ENCODE measurements at regions of chr22 and their contacts with region 1.

Region 1: DNA sequence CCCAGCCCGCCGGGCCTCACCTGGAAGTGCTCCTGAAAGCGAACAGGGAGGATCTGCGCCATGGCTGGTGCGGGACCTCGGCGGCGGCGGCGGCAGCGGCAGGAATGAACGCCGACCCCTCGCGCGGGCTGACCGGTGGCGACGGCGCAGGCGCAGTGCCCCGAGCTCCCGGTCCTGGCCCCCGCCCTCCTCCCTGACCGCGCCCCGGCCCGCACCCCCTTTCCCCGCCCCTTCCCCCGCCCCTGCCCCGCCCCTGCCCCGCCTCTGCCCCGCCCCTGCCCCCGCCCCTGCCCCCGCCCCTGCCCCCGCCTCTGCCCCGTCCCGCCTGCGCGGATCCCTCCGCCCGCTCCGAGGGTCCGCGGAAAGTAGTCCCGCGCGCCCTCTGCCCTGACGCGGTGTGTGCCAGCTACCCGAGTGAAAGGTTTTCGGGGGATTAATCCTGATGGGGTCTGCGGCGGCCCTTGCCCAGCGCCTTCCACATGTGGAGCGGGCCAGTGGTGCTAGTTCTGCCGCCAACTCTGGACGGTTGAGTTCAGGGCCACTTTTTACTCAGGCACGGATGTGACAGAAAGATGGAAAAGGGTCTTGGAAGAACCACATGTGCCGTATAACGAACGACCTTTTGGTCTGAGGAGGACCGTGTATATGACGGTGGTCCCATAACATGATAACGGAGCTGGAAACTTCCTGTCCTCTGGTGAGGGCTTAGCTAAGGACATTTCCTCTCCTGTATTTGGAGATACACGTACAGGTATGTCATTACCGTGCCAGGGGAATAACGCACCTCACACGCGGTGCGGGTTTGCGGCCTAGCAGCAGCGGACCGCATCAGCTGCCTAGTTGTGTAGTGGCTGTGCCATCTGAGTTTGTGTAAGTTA is at the start of gene CLTCL1:
- DNase-seq: peak; percentile 57
- H3K4me3 Mint-ChIP-seq: peak within 1 kb of the TSS; percentile 84
- H3K27ac Mint-ChIP-seq: peak within 1 kb of the TSS; percentile 52
- H3K4me1 Mint-ChIP-seq: peaks cover 35% of the 10 kb centered on the region
- H3K27me3 Mint-ChIP-seq: no peaks in the 10 kb centered on the region
- CTCF ChIP-seq: no peak
- total RNA-seq, gene CLTCL1: 12.2 and 21.7 TPM in 2 replicates

Region 2: GRCh38 chr22:19143967-19144400 is 147.8 kb before region 1 on chr22:
- CTCF ChIA-PET with region 1: interaction called, 8 read pairs
- POLR2A ChIA-PET with region 1: interaction called, 13 read pairs
- intact Hi-C with region 1: no loop called
- DNase-seq: no peak
- H3K4me3 Mint-ChIP-seq: peak overlapping the region; percentile 100
- H3K27ac Mint-ChIP-seq: peak overlapping the region; percentile 99
- H3K4me1 Mint-ChIP-seq: peaks cover 11% of the 10 kb centered on the region
- H3K27me3 Mint-ChIP-seq: no peaks in the 10 kb centered on the region
- CTCF ChIP-seq: no peak

Region 3: DNA sequence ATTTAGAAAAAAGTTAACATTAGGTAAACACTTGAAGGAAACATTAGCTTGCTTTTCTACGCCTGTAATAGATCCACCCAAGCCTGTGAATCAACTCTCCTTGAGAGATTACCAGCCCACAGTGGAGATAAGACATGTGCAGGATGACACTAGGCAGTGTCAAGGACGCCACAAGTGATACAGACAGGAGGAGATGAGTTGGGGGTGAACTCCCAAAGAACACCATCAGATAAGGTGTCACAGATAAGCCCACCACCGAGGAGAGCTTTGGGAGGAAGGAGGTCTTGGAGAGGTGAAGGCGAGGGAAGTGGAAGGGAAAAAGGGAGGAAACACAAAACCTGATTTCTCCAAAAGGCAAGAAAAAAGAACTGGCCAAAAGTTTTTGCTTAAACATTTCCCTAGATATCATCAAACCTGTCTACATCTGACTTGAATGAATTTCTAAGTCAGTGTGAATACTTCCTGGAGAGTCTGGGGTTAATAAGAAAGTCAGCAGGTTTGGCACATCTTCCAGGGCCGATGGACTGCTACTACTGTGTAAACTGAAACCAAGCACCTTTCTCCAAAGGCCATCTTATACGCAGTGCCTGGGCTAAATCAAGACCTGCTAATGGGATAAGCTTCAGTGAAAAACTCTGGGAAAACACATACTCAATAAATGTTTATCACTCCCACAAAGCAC is 15.8 kb before region 1 on chr22:
- CTCF ChIA-PET with region 1: interaction called, 3 read pairs
- POLR2A ChIA-PET with region 1: interaction called, 11 read pairs
- intact Hi-C with region 1: no loop called
- DNase-seq: no peak
- H3K4me3 Mint-ChIP-seq: no peak overlapping the region
- H3K27ac Mint-ChIP-seq: no peak overlapping the region
- H3K4me1 Mint-ChIP-seq: peaks cover 16% of the 10 kb centered on the region
- H3K27me3 Mint-ChIP-seq: no peaks in the 10 kb centered on the region
- CTCF ChIP-seq: no peak

Region 4: GRCh38 chr22:19479357-19480172 is 187.7 kb after region 1 on chr22 and contains the start of gene CDC45:
- CTCF ChIA-PET with region 1: interaction called, 4 read pairs
- POLR2A ChIA-PET with region 1: interaction called, 22 read pairs
- intact Hi-C with region 1: no loop called
- DNase-seq: peak; percentile 98
- H3K4me3 Mint-ChIP-seq: peak within 1 kb of the TSS; percentile 96
- H3K27ac Mint-ChIP-seq: peak within 1 kb of the TSS; percentile 100
- H3K4me1 Mint-ChIP-seq: peaks cover 38% of the 10 kb centered on the region
- H3K27me3 Mint-ChIP-seq: no peaks in the 10 kb centered on the region
- CTCF ChIP-seq: no peak
- total RNA-seq, gene CDC45: 7.5 and 18.6 TPM in 2 replicates

Region 5: DNA sequence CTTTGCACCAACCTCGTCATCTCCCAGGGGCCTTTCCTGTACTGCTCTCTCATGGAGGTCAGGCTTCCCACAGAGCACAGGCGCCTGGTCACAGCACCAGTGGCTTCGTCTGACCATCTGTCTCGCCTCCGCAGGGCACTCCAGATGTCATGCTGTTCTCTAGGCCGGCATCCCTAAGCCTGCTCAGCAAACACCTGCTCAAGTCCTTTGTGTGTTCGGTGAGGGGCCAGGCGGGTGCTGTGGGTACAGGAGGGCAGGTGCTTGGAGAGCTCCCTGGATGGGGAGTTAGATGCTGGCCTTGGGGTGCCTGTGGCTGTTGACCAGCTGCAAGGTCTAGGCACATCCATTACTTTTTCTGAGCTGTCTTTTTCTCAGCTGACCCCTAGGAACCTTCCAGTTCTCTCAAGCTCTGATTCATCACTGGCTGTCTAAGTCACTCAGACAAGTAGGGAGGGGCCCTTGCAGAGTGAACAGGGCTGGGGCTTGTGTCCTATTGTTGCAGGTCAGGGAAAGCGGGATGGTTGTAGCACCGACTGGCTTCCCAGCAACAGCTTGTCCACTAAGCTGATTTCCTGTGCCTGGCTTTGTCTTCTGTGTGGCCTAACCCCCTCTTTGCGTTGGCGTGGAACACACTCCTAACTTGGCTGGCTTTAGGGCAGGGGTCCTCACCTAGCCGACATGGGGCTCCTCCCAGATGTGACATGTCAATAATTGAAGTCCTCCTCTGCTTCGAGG is 223.2 kb after region 1 on chr22:
- CTCF ChIA-PET with region 1: no interaction called
- POLR2A ChIA-PET with region 1: no interaction called
- intact Hi-C with region 1: no loop called
- DNase-seq: no peak
- H3K4me3 Mint-ChIP-seq: no peak overlapping the region
- H3K27ac Mint-ChIP-seq: no peak overlapping the region
- H3K4me1 Mint-ChIP-seq: no peaks in the 10 kb centered on the region
- H3K27me3 Mint-ChIP-seq: no peaks in the 10 kb centered on the region
- CTCF ChIP-seq: no peak

Region 6: DNA sequence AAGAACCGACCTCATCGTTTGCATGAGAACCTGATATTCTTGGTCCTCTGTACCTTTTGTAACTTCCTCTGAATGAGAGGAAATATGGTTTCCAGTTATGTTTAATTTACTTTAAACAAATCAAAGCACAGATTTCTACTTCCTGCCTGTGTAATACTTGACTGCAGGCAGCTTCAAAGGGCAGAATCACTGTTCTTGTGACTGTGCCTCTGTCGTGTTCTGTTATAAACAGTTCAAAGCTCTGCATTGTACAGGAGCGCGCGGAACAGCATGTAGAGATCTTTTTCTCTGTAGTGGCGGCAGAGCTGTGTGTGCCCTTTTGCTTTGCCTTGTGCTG is 305.5 kb after region 1 on chr22:
- CTCF ChIA-PET with region 1: no interaction called
- POLR2A ChIA-PET with region 1: no interaction called
- intact Hi-C with region 1: no loop called
- DNase-seq: no peak
- H3K4me3 Mint-ChIP-seq: no peak overlapping the region
- H3K27ac Mint-ChIP-seq: peak overlapping the region; percentile 51
- H3K4me1 Mint-ChIP-seq: peaks cover 16% of the 10 kb centered on the region
- H3K27me3 Mint-ChIP-seq: no peaks in the 10 kb centered on the region
- CTCF ChIP-seq: no peak

Region 7: GRCh38 chr22:19607192-19608002 is 315.6 kb after region 1 on chr22:
- CTCF ChIA-PET with region 1: no interaction called
- POLR2A ChIA-PET with region 1: no interaction called
- intact Hi-C with region 1: no loop called
- DNase-seq: peak; percentile 71
- H3K4me3 Mint-ChIP-seq: no peak overlapping the region
- H3K27ac Mint-ChIP-seq: peak overlapping the region; percentile 51
- H3K4me1 Mint-ChIP-seq: peaks cover 13% of the 10 kb centered on the region
- H3K27me3 Mint-ChIP-seq: no peaks in the 10 kb centered on the region
- CTCF ChIP-seq: no peak